AG04449 (cell line): ENCODE measurements at regions of chr14 and their contacts with region 1.

Region 1: DNA sequence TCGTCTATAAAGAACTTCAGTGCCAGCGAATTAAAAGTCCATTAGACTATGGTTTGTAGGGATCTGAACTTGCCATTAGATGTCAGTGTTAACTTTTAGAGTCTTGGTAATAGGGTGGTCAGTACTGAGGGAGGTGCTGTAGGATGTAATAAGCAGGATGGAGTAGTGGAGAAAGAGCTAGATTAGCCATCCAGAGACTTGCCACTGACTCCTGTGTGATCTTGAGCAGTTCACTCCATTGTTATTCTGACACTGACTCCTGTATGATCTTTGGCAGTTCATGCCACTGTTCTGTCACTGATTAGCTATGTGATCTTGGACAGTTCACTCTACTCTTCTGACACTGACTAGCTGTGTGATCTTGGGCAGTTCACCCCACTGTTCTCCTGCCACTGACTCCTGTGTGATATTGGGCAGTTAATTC is 133.6 kb downstream of the TTLL5 start:
- DNase-seq: peak; percentile 21
- H3K4me3 ChIP-seq: no peak overlapping the region
- CTCF ChIP-seq: peak; percentile 50

Region 2: GRCh38 chr14:75619548-75619947 is 175.1 kb before region 1 on chr14:
- CTCF ChIA-PET with region 1: no interaction called
- POLR2A ChIA-PET with region 1: no interaction called
- DNase-seq: no peak
- H3K4me3 ChIP-seq: no peak overlapping the region
- CTCF ChIP-seq: no peak

Region 3: GRCh38 chr14:75769047-75769685 is 25.5 kb before region 1 on chr14:
- CTCF ChIA-PET with region 1: interaction called, 21 read pairs
- POLR2A ChIA-PET with region 1: no interaction called
- DNase-seq: no peak
- H3K4me3 ChIP-seq: no peak overlapping the region
- CTCF ChIP-seq: no peak

Region 4: GRCh38 chr14:75822522-75823141 is 28.0 kb after region 1 on chr14:
- CTCF ChIA-PET with region 1: interaction called, 11 read pairs
- POLR2A ChIA-PET with region 1: no interaction called
- DNase-seq: no peak
- H3K4me3 ChIP-seq: no peak overlapping the region
- CTCF ChIP-seq: no peak

Region 5: GRCh38 chr14:75926431-75927115 is 131.9 kb after region 1 on chr14:
- CTCF ChIA-PET with region 1: no interaction called
- POLR2A ChIA-PET with region 1: no interaction called
- DNase-seq: no peak
- H3K4me3 ChIP-seq: no peak overlapping the region
- CTCF ChIP-seq: no peak

Region 6: DNA sequence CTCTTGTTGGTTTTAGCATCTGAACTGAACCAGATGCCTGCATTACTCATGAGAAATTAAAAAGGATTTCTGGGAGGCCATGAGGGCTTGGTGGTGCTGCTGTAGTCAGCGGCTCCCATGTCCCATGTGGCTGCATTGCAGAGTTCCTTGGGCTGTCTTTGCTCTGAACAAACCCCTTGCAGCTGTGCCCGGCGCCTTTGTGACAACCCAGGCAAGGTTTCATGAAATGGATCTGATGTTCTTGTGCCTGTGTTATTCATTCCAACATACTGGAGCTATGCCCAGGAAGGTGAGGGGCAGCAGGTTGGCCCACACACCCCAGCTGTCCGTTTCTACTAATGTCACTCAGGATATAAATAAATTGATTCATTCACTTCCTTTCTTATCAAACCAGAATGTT is 146.4 kb after region 1 on chr14:
- CTCF ChIA-PET with region 1: no interaction called
- POLR2A ChIA-PET with region 1: no interaction called
- DNase-seq: no peak
- H3K4me3 ChIP-seq: no peak overlapping the region
- CTCF ChIP-seq: no peak

Region 7: GRCh38 chr14:75968456-75968855 is 173.8 kb after region 1 on chr14:
- CTCF ChIA-PET with region 1: interaction called, 333 read pairs
- POLR2A ChIA-PET with region 1: no interaction called
- DNase-seq: no peak
- H3K4me3 ChIP-seq: no peak overlapping the region
- CTCF ChIP-seq: no peak